PC-3 (cell line): ENCODE measurements at regions of chr12 and their contacts with region 1.

Region 1: GRCh38 chr12:66144791-66145754 is 14.5 kb upstream of the LLPH start:
- DNase-seq: peak; percentile 91
- ATAC-seq: peak; percentile 89
- H3K4me3 ChIP-seq: peak overlapping the region; percentile 17; the same call in 1 of the 2 replicates
- H3K27ac ChIP-seq: 0 out of 2 replicates have a peak overlapping the region, but pooled peaks have one; percentile 19
- H3K4me1 ChIP-seq: peaks cover 12% of the 10 kb centered on the region
- H3K27me3 ChIP-seq: no peaks in the 10 kb centered on the region
- CTCF ChIP-seq: peak; percentile 93

Region 2: GRCh38 chr12:66169221-66170170 is 24.4 kb after region 1 on chr12 and contains the start of gene TMBIM4:
- CTCF ChIA-PET with region 1: interaction called, 12 read pairs
- POLR2A ChIA-PET with region 1: interaction called, 6 read pairs
- intact Hi-C with region 1: no loop called
- DNase-seq: peak; percentile 82
- ATAC-seq: peak; percentile 85
- H3K4me3 ChIP-seq: peak within 1 kb of the TSS; percentile 89
- H3K27ac ChIP-seq: peak within 1 kb of the TSS; percentile 95
- H3K4me1 ChIP-seq: peaks cover 9% of the 10 kb centered on the region
- H3K27me3 ChIP-seq: no peaks in the 10 kb centered on the region
- CTCF ChIP-seq: peak; percentile 61
- total RNA-seq, gene TMBIM4: 36.3 and 63.2 TPM in 2 replicates

Region 3: DNA sequence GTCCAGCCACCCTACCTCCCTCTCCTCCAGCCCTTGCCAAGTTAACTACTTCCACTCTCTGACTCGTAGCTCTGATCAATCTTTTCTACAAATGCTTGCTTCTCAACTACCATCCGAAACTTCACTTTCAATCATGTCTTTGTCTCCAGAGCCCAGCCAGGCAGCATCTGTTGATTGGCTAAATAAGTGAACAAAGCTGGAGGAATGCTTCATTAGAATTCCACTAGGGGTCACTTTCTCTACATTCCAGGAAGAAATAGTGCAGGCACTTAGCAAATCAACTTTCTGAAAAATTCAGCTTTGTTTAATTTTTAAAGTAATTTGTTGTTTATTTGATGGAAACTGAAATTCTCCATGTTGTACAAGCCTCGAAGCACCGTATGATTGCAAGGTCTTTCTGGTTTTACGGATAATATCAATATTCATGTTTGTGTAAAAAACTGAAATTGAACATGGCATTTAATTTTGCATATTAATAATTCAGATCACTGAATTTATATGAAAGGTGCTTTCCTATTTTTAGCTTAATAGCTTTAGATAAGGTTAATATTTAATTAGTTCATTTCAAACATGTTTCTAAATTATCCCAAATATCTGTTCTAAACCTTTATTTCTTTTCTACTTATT is 124.8 kb after region 1 on chr12:
- CTCF ChIA-PET with region 1: interaction called, 4 read pairs
- POLR2A ChIA-PET with region 1: no interaction called
- intact Hi-C with region 1: loop called (anchors 10 kb)
- DNase-seq: peak; percentile 68
- ATAC-seq: peak; percentile 72; the same call in 1 of the 2 replicates
- H3K4me3 ChIP-seq: no peak overlapping the region
- H3K27ac ChIP-seq: no peak overlapping the region
- H3K4me1 ChIP-seq: no peaks in the 10 kb centered on the region
- H3K27me3 ChIP-seq: 0 out of 2 replicates have a peak, but pooled peaks cover 3% of the 10 kb centered on the region
- CTCF ChIP-seq: peak; percentile 83

Region 4: GRCh38 chr12:66301944-66302826 is 157.1 kb after region 1 on chr12 and contains the start of gene HELB:
- CTCF ChIA-PET with region 1: no interaction called
- POLR2A ChIA-PET with region 1: interaction called, 3 read pairs
- intact Hi-C with region 1: loop called (anchors 10 kb)
- DNase-seq: peak; percentile 98
- ATAC-seq: peak; percentile 92
- H3K4me3 ChIP-seq: peak within 1 kb of the TSS; percentile 98
- H3K27ac ChIP-seq: peak within 1 kb of the TSS; percentile 57
- H3K4me1 ChIP-seq: peaks cover 17% of the 10 kb centered on the region
- H3K27me3 ChIP-seq: no peaks in the 10 kb centered on the region
- CTCF ChIP-seq: no peak
- total RNA-seq, gene HELB: 2.1 and 2.7 TPM in 2 replicates

Region 5: DNA sequence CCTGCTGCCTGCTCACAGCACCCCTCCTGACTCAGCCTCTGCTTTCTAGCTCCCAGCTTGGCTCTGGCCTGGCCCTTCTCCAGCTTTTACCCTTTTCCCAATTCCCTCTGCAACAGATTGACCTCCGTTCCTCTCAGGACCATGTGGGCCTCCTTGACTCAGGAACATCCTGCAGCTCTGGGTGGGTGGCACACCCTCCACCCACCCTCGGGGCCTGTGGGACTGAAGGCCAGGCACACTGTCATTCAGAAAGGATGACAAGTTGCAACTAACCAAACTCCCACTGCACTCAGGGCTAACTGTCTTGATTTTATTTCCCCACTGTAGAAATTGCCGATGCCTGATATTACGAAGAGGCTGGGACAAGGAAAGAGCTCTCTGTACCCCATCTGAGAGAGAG is 216.6 kb after region 1 on chr12:
- CTCF ChIA-PET with region 1: no interaction called
- POLR2A ChIA-PET with region 1: no interaction called
- intact Hi-C with region 1: no loop called
- DNase-seq: no peak
- ATAC-seq: no peak
- H3K4me3 ChIP-seq: no peak overlapping the region
- H3K27ac ChIP-seq: no peak overlapping the region
- H3K4me1 ChIP-seq: no peaks in the 10 kb centered on the region
- H3K27me3 ChIP-seq: no peaks in the 10 kb centered on the region
- CTCF ChIP-seq: no peak

Region 6: DNA sequence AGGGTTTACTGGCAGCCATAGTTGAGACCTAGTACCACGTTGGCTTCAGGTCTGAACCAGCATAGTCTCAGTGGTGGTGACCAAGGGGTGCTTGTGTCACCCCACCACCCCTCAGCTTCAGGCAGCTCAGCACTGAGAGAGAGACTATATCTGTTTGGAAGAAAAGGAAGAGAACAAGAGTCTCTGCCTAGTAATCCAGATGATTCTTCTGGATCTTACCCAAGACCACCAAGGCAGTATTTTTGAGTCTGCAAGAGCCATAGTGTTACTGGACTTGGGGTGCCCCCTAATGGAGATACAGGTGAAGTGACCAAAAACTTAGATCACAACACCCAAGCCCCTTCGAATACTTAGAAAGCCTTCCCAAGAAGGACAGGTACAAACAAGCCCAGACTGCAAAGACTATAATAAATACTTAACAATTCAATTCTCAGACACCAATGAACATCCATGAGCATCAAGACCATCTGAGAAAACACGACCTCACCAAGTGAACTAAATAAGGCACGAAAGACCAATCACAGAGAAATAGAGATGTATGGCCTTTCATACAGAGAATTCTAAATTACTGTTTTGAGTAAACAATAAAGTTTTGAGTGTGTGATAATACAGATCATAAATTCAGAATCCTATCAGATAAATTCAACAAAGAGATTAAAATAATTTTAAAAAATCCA is 264.3 kb after region 1 on chr12:
- CTCF ChIA-PET with region 1: no interaction called
- POLR2A ChIA-PET with region 1: no interaction called
- intact Hi-C with region 1: loop called (anchors 1 kb)
- DNase-seq: peak; percentile 59
- ATAC-seq: peak; percentile 51; the same call in 1 of the 2 replicates
- H3K4me3 ChIP-seq: no peak overlapping the region
- H3K27ac ChIP-seq: no peak overlapping the region
- H3K4me1 ChIP-seq: peaks cover 10% of the 10 kb centered on the region
- H3K27me3 ChIP-seq: no peaks in the 10 kb centered on the region
- CTCF ChIP-seq: peak; percentile 81

Region 7: GRCh38 chr12:66693901-66694675 is 549.0 kb after region 1 on chr12:
- CTCF ChIA-PET with region 1: no interaction called
- POLR2A ChIA-PET with region 1: no interaction called
- intact Hi-C with region 1: loop called (anchors 2 kb)
- DNase-seq: peak; percentile 89
- ATAC-seq: peak; percentile 93
- H3K4me3 ChIP-seq: no peak overlapping the region
- H3K27ac ChIP-seq: no peak overlapping the region
- H3K4me1 ChIP-seq: no peaks in the 10 kb centered on the region
- H3K27me3 ChIP-seq: peaks cover 7% of the 10 kb centered on the region; the same call in 1 of the 2 replicates
- CTCF ChIP-seq: peak; percentile 83